ENCODE measurements at regions of chr13 and their contacts with region 1.

Region 1: GRCh38 chr13:52141297-52141696 is 12.4 kb upstream of the NEK5 start:
- DNase-seq: no peak
- ATAC-seq: no peak
- H3K4me3 ChIP-seq: no peak overlapping the region
- H3K27ac ChIP-seq: no peak overlapping the region
- H3K4me1 ChIP-seq: no peaks in the 10 kb centered on the region
- H3K27me3 ChIP-seq: no peaks in the 10 kb centered on the region
- CTCF ChIP-seq: peak in 1 of 12 donors; percentile 15
- POLR2A ChIP-seq: no peak

Region 2: GRCh38 chr13:51978796-51979556 is 162.3 kb before region 1 on chr13:
- intact Hi-C with region 1: no loop called
- DNase-seq: no peak
- ATAC-seq: peak; percentile 52 to 90 (median 74)
- H3K4me3 ChIP-seq: no peak overlapping the region
- H3K27ac ChIP-seq: peak overlapping the region in 1 of 12 donors; percentile 34
- H3K4me1 ChIP-seq: peaks cover 0 to 24% (median 0%) of the 10 kb centered on the region in 12 donors
- H3K27me3 ChIP-seq: no peaks in the 10 kb centered on the region
- CTCF ChIP-seq: no peak
- POLR2A ChIP-seq: no peak

Region 3: DNA sequence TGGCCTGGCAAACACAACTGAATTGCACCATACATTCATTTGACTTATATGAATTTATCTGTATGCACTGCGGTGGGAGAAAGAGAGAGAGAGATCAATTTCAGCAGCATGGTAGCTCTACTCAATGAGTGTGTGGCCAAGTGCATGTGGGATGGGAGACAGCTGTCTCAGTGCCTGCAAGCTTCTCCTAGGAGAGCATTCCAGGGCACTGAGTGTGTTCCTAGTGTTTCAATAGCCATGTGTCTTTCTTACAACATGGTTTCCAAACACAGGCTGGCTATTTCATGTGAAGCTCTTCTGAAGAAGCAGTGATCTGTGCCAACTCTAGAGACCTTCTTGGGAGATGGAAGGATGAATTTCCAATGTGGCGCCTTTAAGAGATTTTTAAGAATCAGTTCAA is 55.9 kb before region 1 on chr13:
- intact Hi-C with region 1: no loop called
- DNase-seq: no peak
- ATAC-seq: no peak
- H3K4me3 ChIP-seq: no peak overlapping the region
- H3K27ac ChIP-seq: no peak overlapping the region
- H3K4me1 ChIP-seq: no peaks in the 10 kb centered on the region
- H3K27me3 ChIP-seq: no peaks in the 10 kb centered on the region
- CTCF ChIP-seq: no peak
- POLR2A ChIP-seq: no peak

Region 4: GRCh38 chr13:52159321-52160086 is 18.2 kb after region 1 on chr13 and contains the start of gene NEK3:
- intact Hi-C with region 1: loop called in 1 of 10 experiments (anchors 2 kb)
- DNase-seq: peak; percentile 77 to 87 (median 84)
- ATAC-seq: peak; percentile 80 to 96 (median 93)
- H3K4me3 ChIP-seq: peak within 1 kb of the TSS; percentile 73 to 99 (median 88)
- H3K27ac ChIP-seq: peak within 1 kb of the TSS; percentile 81 to 98 (median 90)
- H3K4me1 ChIP-seq: peaks cover 0 to 46% (median 23%) of the 10 kb centered on the region in 12 donors
- H3K27me3 ChIP-seq: no peaks in the 10 kb centered on the region
- CTCF ChIP-seq: no peak
- POLR2A ChIP-seq: peak in 1 of 2 donors; percentile 30
- total RNA-seq, gene NEK3: 2.3 to 10.7 (median 5.2) TPM

Region 5: DNA sequence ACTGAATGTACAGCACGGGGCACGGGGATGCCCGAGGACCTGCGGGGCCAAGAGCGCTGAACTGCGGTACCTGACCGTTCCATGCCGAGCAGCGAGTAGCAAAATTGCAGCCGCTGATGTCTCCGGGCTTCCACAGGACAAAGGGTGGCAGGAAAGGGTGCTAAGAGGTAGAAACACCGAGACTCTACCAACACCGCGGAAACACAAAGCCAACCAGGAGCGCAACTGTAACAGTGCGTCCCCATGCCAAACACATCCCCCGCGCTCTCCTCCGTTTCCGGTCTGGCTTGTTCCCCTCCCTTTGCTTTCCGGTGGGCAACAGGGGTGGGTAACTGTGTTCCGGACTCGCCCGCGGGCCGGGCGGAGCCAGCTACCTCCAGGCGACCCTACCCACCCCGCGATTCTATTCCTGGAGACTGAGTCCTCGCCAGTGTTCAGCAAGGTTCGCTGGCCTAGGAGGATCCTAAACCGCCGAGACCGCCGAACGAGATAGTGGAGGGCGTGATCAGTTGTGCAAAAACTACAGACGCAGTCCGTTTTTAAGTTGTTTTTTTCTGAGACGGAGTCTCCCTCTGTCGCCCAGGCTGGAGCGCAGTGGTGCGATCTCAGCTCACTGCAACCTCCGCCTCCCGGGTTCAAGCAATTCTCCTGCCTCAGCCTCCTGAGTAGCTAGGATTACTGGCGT is 53.0 kb after region 1 on chr13:
- intact Hi-C with region 1: loop called in 1 of 10 experiments (anchors 10 kb)
- DNase-seq: peak; percentile 85 to 92 (median 87)
- ATAC-seq: peak; percentile 91 to 95 (median 94)
- H3K4me3 ChIP-seq: peak overlapping the region; percentile 50 to 98 (median 82)
- H3K27ac ChIP-seq: peak overlapping the region; percentile 63 to 90 (median 84)
- H3K4me1 ChIP-seq: peaks cover 0 to 29% (median 18%) of the 10 kb centered on the region in 12 donors
- H3K27me3 ChIP-seq: no peaks in the 10 kb centered on the region
- CTCF ChIP-seq: peak in 2 of 12 donors; percentile 25 to 32
- POLR2A ChIP-seq: peak in 1 of 2 donors; percentile 46

Measured in heart left ventricle (tissue), 16 donors.